ENCODE measurements at regions of chr4 and their contacts with region 1.

Region 1: DNA sequence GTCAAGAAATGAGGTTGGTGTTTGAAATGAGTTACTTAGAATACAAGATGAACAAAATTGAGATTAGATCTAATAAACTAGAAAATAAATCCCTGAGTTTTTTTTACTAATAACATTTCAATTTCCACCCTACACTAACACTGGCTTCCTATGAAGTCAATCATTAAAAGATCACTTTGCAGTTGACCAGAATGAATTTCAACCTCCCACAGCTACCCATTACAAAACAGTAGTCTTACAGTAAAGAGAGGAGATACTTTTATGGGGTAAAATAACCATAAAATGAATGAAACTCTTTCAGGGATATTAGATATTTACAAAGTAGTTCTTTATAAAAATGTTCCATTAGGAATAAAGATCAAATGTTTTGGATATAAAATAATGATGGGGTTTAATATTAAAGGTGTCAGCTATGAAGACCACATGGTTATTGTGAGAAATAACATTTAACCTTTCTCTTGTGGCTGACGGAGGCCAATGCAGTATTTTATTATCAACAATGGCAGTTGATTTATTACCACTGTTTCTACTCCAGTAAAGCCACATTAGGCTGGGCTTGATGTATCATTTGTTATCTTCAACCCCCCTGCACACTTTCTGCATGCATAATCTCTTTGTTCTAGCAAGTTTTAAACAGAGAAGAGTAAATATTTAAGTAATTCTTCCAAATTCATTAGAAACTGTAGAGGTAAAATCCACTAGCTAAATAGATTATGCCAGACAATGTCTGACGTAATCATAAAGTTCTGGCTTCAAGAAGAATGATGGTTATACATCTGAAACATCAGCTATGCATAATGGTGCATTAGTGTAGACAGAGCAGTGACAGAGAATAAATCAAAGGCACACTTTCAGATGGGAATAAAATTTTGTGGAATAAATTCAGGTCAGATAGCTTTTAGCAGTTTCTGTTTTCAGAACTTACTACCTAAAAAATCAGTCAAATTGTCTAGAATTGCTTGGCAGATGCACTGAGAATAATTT is 516.6 kb downstream of the PCDH18 start:
- DNase-seq: no peak

Region 2: DNA sequence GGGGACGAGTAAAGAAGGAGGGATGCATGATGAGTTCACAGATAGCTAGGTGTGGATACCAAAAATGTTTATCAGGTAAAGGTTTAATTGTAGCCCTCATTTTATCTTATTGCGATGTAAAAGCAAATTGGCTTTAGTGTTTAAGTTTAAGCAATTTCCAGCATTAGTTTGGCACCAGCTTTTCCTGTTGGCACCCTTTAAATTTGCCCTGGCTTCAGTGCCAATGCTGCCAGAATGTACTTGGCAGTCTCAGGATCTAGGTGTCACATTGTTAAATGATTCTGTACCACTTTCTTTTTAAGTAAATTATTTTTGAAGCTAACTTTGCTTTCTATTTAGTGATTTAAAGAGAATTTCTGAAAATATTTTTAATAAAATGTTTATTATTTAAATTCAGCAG is 165.3 kb before region 1 on chr4:
- intact Hi-C with region 1: no loop called
- DNase-seq: no peak

Region 3: DNA sequence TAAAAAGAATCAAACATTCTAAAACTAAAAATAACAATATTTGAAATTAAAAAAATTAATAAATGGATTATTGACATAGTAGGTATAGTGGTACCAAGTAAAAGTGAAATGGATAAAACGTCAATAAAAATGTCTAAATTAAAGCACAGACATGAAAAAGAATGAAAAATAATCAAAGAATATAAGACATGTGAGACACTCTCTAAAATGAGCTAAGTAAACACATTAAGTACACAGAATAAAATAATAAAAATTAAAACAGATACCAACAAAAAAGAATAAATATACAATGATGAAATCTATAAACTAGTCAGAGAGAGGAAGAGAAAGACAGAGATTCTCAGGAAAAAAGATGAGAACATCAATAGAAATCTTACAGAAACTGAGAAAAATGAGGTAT is 45.0 kb after region 1 on chr4:
- intact Hi-C with region 1: no loop called
- DNase-seq: no peak

Region 4: DNA sequence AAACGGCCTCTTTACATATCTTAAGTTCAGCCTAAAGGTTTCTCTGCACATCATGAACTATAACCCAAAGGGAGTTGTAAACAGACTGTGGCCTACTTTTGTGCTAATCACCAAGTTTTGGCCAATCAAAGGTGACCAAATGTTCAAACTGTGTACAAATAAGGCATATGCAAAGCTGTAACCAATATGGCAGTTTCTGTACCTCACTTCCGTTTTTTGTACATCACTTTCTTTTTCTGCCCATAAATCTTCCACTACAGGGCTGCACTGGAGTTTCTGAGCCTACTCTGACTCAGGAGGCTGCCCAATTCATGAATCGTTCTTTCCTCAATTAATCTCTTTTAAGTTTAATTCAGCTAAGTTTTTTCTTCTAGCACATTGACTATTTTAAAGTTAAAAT is 907.8 kb after region 1 on chr4:
- intact Hi-C with region 1: loop called in 1 of 2 experiments (anchors 5 kb)
- DNase-seq: no peak